CD8-positive, alpha-beta memory T cell (primary cell): ENCODE measurements at regions of chr3 and their contacts with region 1.

Region 1: DNA sequence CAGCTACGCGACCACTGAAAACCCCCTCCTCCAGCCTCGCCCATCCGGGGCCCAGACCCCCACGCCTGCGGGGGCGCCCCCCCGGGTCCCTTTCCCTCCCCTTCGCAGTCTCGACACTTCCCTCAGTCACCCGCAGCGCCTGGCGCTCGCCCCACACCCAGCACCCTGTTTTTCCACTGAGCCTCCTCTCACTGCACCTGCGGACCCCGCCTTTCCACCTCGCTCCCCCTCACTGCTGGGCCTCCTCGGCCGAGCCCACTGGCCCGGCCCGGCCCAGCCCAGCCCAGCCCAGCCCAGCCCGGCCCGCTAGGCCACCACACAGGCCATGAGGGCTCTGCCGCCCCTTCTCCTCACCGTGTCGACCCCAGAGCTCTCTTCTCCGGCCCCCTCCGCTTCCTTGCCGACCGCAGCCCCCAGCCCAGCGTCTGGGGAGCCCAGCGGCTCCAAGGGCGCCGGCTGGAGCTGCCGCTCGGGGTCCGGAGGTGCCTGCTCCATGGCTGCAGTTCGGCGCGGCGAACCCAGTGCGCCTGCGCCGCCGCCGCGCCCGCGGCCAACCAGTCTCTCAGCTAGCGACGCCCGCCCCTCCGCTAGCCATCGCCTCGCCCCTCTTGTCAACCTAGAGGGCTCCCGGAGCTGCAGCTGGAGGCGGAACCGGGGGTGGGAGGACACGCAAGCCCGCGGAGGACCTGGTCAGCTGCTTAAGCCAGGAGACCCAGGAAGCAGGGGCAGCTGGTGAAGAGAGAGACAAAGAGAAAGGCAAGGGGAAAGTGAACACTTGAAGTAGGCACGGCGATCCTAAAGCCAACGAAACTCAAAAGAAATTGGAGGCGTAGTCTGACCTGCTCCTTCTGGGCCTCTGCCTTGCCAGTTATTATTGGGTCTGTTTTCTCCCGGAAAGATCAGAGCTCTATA is at the start of gene SNX4:
- DNase-seq: peak; percentile 81 to 92 (median 83)
- H3K4me3 ChIP-seq: peak within 1 kb of the TSS; percentile 90
- H3K4me3 Mint-ChIP-seq: peak within 1 kb of the TSS; percentile 95 to 98 (median 97)
- H3K27ac ChIP-seq: peak within 1 kb of the TSS; percentile 45
- H3K27ac Mint-ChIP-seq: peak within 1 kb of the TSS; percentile 82 to 97 (median 96)
- H3K4me1 ChIP-seq: peaks cover 12% of the 10 kb centered on the region
- H3K4me1 Mint-ChIP-seq: peaks cover 30 to 55% (median 45%) of the 10 kb centered on the region in 3 donors
- H3K27me3 ChIP-seq: no peaks in the 10 kb centered on the region
- H3K27me3 Mint-ChIP-seq: peaks cover 0 to 1% of the 10 kb centered on the region in 2 donors
- total RNA-seq, gene SNX4: 48.7 to 50.8 TPM

Region 2: DNA sequence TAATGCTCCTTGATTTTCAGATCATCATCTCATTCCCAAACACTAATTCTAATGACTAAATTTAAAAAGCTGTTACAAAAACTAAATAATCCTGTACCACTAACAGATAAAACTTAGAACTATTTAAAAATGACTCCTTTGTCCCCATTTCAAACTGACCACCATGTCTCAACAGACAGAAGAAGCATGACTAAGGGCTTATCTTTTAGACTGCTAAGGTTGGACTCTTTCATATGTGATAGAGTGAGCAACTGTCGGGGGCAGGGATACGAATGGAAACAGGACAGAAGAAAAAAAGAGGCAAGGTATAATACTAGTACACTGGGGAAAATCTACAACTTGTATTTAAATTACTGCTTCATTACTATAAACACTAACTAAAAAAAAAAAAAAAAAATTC is 23.2 kb before region 1 on chr3:
- CTCF ChIA-PET with region 1: no interaction called
- POLR2A ChIA-PET with region 1: no interaction called
- DNase-seq: no peak
- H3K4me3 ChIP-seq: no peak overlapping the region
- H3K4me3 Mint-ChIP-seq: no peak overlapping the region
- H3K27ac ChIP-seq: no peak overlapping the region
- H3K27ac Mint-ChIP-seq: peak overlapping the region in 1 of 8 donors; percentile 74
- H3K4me1 ChIP-seq: no peaks in the 10 kb centered on the region
- H3K4me1 Mint-ChIP-seq: peaks cover 3 to 6% (median 4%) of the 10 kb centered on the region in 3 donors
- H3K27me3 ChIP-seq: no peaks in the 10 kb centered on the region
- H3K27me3 Mint-ChIP-seq: no peaks in the 10 kb centered on the region

Region 3: DNA sequence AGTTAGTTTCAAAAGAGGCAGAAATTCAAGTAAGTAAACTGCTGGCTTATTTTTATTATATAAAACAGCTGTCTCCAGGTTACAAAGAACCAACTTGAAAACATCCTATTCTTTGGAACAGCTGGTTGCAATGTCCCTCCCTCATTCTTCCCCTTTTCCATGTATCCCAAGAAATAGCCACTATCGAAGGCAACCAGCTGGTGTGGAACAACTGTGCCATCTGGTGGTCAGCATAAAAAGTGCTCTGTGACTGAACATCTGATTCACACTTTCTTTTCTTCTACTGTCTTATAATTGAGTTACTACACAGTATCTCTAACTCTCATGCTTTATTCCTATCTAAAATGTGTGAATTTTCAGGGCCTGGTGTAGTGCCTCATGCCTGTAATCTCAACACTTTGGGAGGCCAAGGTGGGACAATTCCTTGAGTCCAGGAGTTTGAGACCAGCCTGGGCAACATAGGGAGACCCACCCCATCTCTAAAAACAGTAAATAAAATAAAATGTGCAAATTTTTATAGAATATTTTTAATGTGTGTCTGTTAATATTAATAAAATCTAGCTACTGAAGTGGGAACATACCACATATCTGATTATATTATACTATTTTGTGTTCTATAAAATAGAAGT is 65.8 kb after region 1 on chr3:
- CTCF ChIA-PET with region 1: interaction called, 10 read pairs
- POLR2A ChIA-PET with region 1: no interaction called
- DNase-seq: peak; percentile 11 to 51 (median 21)
- H3K4me3 ChIP-seq: no peak overlapping the region
- H3K4me3 Mint-ChIP-seq: peak overlapping the region in 2 of 7 donors; percentile 4 to 15
- H3K27ac ChIP-seq: no peak overlapping the region
- H3K27ac Mint-ChIP-seq: peak overlapping the region in 1 of 8 donors; percentile 0
- H3K4me1 ChIP-seq: no peaks in the 10 kb centered on the region
- H3K4me1 Mint-ChIP-seq: peaks cover 17 to 30% (median 25%) of the 10 kb centered on the region in 3 donors
- H3K27me3 ChIP-seq: no peaks in the 10 kb centered on the region
- H3K27me3 Mint-ChIP-seq: no peaks in the 10 kb centered on the region